Activated CD8-positive, alpha-beta T cell treated with anti-CD3 and anti-CD28 coated beads, Interleukin-2, amount 10 ng/mL, durations not matched to agents 7 days and 5 days (primary cell): ENCODE measurements at regions of chr4 and their contacts with region 1.

Region 1: DNA sequence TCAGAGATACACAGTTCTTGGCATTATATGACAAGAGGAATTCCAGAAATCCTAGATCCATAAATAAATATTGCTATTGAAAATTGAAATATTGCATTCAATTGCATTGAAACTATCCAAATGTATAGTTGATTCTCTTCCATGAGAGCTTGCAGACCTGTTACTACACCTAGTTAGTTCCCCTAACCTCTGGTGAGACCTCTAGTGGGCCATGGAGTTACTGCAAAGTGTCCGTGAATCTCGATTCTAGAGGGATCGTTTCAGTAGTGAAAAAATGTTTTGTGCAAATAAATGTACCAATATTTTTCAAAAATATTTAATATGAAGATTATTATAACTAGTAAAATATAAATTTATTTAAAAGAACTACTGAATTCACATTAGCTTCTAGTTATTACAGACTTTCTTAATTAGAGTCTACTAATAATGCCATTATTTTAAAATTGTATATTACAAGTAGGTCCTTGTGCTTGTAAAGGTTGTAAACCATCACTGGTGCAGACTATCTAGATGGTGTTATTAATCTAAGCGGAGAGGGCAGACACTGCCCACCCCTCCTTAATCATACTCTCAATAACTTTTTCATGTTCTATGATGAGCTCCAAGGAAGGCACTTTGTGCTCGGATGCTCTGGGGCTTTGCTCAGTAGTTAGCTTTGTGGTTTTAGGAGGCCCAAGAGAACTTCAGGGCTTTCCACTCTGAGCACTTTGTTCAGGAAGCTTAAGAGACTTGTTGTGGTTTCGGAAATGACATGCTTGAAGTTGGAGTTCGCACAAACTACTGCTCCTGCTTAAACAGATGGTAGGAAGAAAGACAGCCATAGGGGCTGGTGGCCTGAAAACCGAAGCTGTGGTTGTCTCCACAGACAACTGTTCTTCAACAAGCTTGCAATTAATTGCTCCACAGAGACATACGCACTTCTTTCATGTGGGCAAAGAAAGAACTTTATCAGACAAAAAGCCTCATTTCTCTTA is 42.8 kb downstream of the IL21 start:
- DNase-seq: peak; percentile 80
- ATAC-seq: peak; percentile 85
- H3K4me3 Mint-ChIP-seq: peak overlapping the region; percentile 60
- H3K27ac Mint-ChIP-seq: peak overlapping the region; percentile 81
- H3K4me1 Mint-ChIP-seq: peaks cover 48% of the 10 kb centered on the region
- H3K27me3 Mint-ChIP-seq: no peaks in the 10 kb centered on the region

Region 2: DNA sequence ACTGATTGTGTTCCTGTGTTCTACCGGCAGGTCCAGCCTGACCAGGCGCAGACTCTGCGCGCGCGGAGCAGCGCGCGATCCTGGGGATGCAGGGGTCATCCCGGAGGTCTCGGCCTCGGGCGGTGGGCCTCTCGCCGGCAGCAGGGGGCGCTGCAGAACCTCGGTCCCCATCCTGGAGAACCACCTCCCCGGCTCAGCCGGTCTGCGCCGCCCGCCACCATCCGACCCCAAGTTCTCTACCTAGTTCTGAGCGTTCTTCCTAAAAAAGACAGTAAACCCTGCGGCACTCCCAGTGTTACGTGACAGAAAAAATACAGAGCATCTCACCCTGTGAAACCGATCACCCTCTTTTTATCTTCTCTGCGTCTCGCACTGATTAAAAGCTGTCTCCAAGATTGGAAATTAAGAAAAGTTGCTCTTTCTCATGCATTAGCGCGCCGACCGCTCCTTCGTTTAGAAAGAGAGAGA is 627.8 kb before region 1 on chr4:
- CTCF ChIA-PET with region 1: interaction called, 27 read pairs
- POLR2A ChIA-PET with region 1: no interaction called
- DNase-seq: peak; percentile 89
- ATAC-seq: peak; percentile 87
- H3K4me3 Mint-ChIP-seq: peak overlapping the region; percentile 85
- H3K27ac Mint-ChIP-seq: peak overlapping the region; percentile 40
- H3K4me1 Mint-ChIP-seq: peaks cover 17% of the 10 kb centered on the region
- H3K27me3 Mint-ChIP-seq: peaks cover 53% of the 10 kb centered on the region

Region 3: GRCh38 chr4:122195718-122196117 is 382.4 kb before region 1 on chr4:
- CTCF ChIA-PET with region 1: no interaction called
- POLR2A ChIA-PET with region 1: no interaction called
- DNase-seq: no peak
- ATAC-seq: no peak
- H3K4me3 Mint-ChIP-seq: no peak overlapping the region
- H3K27ac Mint-ChIP-seq: no peak overlapping the region
- H3K4me1 Mint-ChIP-seq: no peaks in the 10 kb centered on the region
- H3K27me3 Mint-ChIP-seq: no peaks in the 10 kb centered on the region

Region 4: DNA sequence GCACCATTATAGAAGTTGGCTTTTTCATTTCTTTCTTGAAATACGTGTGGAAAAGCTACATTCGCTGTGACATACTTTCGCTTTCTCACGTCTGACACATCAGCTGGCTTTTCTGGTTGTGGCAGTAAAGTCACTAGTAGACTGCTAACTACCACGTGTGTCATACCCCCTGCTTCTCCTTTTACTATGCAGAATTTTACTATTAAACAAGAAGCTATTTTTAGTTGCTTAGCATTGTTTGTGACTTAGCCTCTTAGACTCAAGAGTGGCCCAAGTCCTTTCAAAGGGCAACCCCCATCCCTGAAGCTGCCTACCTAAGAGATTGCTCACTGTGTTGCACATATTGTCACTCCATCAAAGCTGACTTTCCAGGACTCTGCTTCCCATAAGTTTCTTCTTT is 119.5 kb before region 1 on chr4:
- CTCF ChIA-PET with region 1: interaction called, 32 read pairs
- POLR2A ChIA-PET with region 1: no interaction called
- DNase-seq: peak; percentile 61
- ATAC-seq: peak; percentile 81
- H3K4me3 Mint-ChIP-seq: peak overlapping the region; percentile 76
- H3K27ac Mint-ChIP-seq: peak overlapping the region; percentile 83
- H3K4me1 Mint-ChIP-seq: peaks cover 43% of the 10 kb centered on the region
- H3K27me3 Mint-ChIP-seq: no peaks in the 10 kb centered on the region

Region 5: DNA sequence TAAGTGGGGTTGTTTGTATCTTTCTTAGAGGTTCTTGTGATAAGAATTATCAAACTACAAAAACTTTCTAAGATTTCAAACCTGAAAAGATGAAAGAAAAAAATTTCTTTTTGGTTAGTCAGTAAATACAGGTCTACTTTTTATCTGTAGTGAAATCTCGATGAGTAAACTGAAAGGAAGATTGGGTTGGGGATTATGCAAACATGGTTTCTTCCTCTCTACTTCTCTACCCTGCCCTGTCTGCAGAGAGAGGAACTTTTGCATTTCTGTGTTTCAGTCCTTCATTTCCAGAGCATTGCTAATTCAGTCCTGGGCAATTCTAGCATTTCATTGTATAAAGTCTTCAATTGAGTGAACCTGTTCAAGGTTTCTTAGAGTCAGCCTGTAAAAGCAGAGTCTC is 70.0 kb before region 1 on chr4:
- CTCF ChIA-PET with region 1: no interaction called
- POLR2A ChIA-PET with region 1: no interaction called
- DNase-seq: no peak
- ATAC-seq: no peak
- H3K4me3 Mint-ChIP-seq: no peak overlapping the region
- H3K27ac Mint-ChIP-seq: no peak overlapping the region
- H3K4me1 Mint-ChIP-seq: peaks cover 28% of the 10 kb centered on the region
- H3K27me3 Mint-ChIP-seq: peaks cover 2% of the 10 kb centered on the region

Region 6: DNA sequence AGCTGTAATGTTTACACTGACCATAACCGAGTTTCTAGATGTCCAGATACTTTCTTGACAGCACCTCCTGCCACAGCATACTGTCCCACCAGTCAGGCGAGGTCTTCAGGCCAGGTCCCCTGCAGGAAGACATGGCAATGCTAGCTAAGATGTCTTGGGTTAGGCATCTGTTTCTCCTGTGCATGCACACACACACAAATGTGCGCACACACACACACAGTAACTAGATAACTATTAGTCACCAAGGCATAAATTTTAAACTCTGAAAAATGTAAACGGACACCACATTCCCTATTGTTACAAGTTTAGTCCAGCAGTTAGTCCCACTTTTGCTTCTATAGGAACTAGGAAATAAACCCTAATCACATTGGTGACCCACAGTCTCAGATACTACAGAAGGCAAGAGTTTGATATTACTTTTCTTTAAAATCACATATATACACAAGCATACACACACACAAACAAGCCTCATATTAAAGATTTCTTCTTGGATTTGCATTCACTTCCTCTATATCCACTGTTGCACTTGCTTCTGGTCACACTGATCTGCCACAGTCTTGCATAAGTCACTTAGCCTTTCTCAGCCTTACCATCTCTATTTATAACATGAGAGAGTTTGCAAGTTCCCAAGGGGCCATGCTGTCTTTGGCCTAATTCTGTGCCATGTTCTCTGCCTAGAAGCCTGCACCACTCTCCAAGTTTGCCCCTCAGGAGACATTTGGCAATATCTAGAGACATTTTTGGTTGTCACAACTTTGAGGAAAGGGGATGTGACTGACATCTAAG is 10.6 kb after region 1 on chr4:
- CTCF ChIA-PET with region 1: interaction called, 14 read pairs
- POLR2A ChIA-PET with region 1: no interaction called
- DNase-seq: no peak
- ATAC-seq: no peak
- H3K4me3 Mint-ChIP-seq: no peak overlapping the region
- H3K27ac Mint-ChIP-seq: no peak overlapping the region
- H3K4me1 Mint-ChIP-seq: peaks cover 27% of the 10 kb centered on the region
- H3K27me3 Mint-ChIP-seq: no peaks in the 10 kb centered on the region

Region 7: DNA sequence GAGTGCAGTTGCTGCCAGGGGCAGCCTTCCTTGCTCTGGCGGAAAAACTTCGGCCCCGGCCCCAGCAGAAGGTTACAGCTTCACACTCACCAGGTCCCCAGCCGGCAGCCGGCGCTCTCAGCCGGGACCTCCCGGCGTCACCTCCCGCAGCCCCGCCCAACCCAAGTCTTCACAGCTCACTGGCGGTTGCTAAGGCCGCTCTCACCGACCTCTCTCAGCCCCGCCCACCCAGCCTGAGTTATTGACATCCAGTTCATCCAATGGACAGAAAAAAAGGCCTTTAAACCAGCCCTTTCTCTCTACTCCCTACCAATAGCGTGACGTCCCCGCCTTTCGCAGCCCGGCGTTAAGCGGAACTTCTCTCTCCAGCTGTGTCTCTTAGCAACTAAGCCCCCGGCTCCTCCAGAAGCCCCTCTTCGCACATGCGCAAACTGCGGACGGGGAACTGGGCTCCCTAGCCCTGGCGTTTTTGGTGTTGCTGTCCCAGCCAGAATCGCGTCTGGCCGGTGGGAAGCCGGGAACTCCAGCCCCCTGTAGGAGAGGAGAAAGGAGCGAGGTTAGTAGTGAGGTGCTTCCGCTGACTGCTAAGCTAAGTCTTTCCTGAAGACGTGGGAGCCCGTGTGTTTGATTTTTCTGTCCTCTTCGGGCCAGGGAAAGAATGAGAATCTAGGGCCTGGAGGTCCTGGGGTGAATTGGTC is 154.4 kb after region 1 on chr4 and contains the start of gene BBS12:
- CTCF ChIA-PET with region 1: interaction called, 11 read pairs
- POLR2A ChIA-PET with region 1: interaction called, 3 read pairs
- DNase-seq: peak; percentile 99
- ATAC-seq: peak; percentile 99
- H3K4me3 Mint-ChIP-seq: peak within 1 kb of the TSS; percentile 93
- H3K27ac Mint-ChIP-seq: peak within 1 kb of the TSS; percentile 88
- H3K4me1 Mint-ChIP-seq: peaks cover 13% of the 10 kb centered on the region
- H3K27me3 Mint-ChIP-seq: no peaks in the 10 kb centered on the region
- total RNA-seq, gene BBS12: 1.3 to 1.4 TPM